Prostate gland (tissue), 2 donors: ENCODE measurements at regions of chr10 and their contacts with region 1.

Region 1: GRCh38 chr10:27558612-27559020 is 54.5 kb downstream of the RAB18 start:
- DNase-seq: peak; percentile 26
- H3K4me3 ChIP-seq: no peak overlapping the region
- H3K27ac ChIP-seq: no peak overlapping the region
- H3K4me1 ChIP-seq: no peaks in the 10 kb centered on the region
- H3K27me3 ChIP-seq: no peaks in the 10 kb centered on the region
- CTCF ChIP-seq: peak in 3 of 4 experiments; percentile 60 to 66 (median 61)
- POLR2A ChIP-seq: no peak

Region 2: GRCh38 chr10:27584302-27584701 is 25.7 kb after region 1 on chr10:
- intact Hi-C with region 1: no loop called
- DNase-seq: no peak
- H3K4me3 ChIP-seq: no peak overlapping the region
- H3K27ac ChIP-seq: no peak overlapping the region
- H3K4me1 ChIP-seq: no peaks in the 10 kb centered on the region
- H3K27me3 ChIP-seq: no peaks in the 10 kb centered on the region
- CTCF ChIP-seq: no peak
- POLR2A ChIP-seq: no peak

Region 3: DNA sequence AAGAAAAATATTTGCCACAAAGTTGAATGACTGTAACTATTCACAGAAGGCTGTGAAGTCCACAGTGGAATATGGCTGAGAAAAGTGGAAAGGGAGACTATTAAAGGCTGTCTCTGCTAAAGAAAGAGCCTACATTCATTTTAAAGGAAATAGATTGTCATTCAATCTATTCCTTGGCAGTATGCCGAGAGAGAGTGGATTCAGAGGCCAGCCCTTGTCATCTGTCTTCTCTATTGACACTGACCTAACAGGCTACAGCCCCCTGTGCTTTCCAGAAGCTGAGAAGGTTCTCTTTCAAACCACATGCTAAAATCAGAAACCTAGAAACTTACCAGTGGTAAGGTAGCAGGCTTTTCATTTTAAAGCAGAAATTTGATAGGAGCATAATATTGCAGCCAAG is 428.2 kb after region 1 on chr10:
- intact Hi-C with region 1: loop called (anchors 5 kb)
- DNase-seq: no peak
- H3K4me3 ChIP-seq: no peak overlapping the region
- H3K27ac ChIP-seq: no peak overlapping the region
- H3K4me1 ChIP-seq: no peaks in the 10 kb centered on the region
- H3K27me3 ChIP-seq: no peaks in the 10 kb centered on the region
- CTCF ChIP-seq: no peak
- POLR2A ChIP-seq: no peak

Region 4: GRCh38 chr10:28179006-28179742 is 620.6 kb after region 1 on chr10:
- intact Hi-C with region 1: loop called (anchors 5 kb)
- DNase-seq: peak; percentile 36
- H3K4me3 ChIP-seq: no peak overlapping the region
- H3K27ac ChIP-seq: peak overlapping the region; percentile 37 to 54
- H3K4me1 ChIP-seq: no peaks in the 10 kb centered on the region
- H3K27me3 ChIP-seq: no peaks in the 10 kb centered on the region
- CTCF ChIP-seq: peak; percentile 43 to 86 (median 75)
- POLR2A ChIP-seq: no peak

Region 5: DNA sequence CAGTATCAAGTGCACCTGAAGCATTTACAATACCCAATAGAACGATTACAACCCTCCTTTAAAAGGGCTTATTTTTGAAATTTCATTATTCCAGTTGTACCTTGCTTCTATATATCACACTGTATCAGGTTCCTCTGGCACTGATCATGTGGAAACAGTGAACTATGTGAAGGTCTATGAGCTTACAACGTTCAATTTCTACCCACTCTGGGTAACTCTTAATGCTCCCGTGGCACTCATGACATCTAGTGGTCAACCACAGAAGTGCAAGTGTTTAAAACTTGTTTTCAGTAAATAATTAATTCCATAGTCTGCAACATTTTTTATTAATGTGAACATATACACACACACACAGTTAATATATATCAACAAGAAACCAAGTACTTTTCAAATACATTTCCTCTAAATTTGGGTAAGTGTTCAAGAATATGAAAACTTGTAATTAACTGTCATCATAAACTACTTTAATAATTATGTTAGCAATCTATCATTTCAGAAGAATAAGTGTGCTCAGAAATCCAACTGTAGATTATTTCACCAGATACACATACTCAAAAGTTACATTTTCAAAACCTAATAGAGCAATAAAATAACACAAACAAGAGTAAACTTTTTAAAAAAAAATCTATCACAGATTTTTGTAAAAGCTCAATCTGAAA is 683.3 kb after region 1 on chr10:
- intact Hi-C with region 1: loop called (anchors 5 kb)
- DNase-seq: peak; percentile 42
- H3K4me3 ChIP-seq: no peak overlapping the region
- H3K27ac ChIP-seq: no peak overlapping the region
- H3K4me1 ChIP-seq: no peaks in the 10 kb centered on the region
- H3K27me3 ChIP-seq: no peaks in the 10 kb centered on the region
- CTCF ChIP-seq: peak; percentile 79 to 86 (median 84)
- POLR2A ChIP-seq: no peak

Region 6: DNA sequence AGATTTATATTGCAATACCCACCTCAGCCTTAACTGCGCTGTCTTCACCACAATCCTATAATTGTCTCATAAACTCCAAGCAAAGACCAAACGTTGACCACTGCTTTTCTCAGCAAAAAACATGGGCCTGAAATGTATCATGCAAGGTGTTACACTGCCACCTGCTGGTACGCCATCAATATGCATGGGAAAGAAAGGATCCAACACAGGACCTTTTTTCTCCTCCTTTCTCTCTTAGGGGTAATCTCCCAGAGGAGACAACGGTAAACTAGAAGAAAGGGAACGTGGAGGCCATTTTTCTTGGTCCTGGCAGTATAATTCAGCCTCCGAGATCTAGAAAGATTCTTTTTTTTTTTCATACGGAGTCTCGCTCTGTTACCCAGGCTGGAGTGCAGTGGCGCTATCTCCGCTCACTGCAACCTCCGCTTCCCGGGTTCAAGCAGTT is 823.3 kb after region 1 on chr10:
- intact Hi-C with region 1: loop called (anchors 10 kb)
- DNase-seq: peak; percentile 85
- H3K4me3 ChIP-seq: no peak overlapping the region
- H3K27ac ChIP-seq: no peak overlapping the region
- H3K4me1 ChIP-seq: no peaks in the 10 kb centered on the region
- H3K27me3 ChIP-seq: no peaks in the 10 kb centered on the region
- CTCF ChIP-seq: peak; percentile 95 to 99 (median 97)
- POLR2A ChIP-seq: no peak